HepG2 (cell line): ENCODE measurements at regions of chr13 and their contacts with region 1.

Region 1: DNA sequence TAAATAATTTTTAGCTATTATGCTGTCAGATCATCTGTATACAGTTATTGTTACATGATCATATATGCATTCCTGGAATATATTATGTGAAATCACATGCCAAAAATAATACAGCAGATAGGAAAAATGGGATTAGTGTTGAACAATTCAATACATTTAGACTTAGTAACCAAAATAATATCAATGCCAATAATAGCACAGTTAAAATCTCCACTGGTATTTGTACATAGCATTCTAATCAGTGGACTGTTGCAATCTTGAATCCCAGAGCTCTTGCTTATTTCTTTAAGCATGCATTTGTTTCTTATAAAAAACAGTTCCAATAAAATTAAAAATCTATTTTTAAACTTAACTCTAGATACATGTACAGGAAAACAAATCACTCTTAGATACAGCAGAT is 2772.2 kb downstream of the PCDH9 start:
- DNase-seq: no peak
- ATAC-seq: no peak
- H3K4me3 ChIP-seq: no peak overlapping the region
- H3K27ac ChIP-seq: no peak overlapping the region
- H3K4me1 ChIP-seq: no peaks in the 10 kb centered on the region
- H3K27me3 ChIP-seq: no peaks in the 10 kb centered on the region
- CTCF ChIP-seq: no peak
- EP300 ChIP-seq: no peak
- POLR2A ChIP-seq: no peak
- RAD21 ChIP-seq: no peak

Region 2: DNA sequence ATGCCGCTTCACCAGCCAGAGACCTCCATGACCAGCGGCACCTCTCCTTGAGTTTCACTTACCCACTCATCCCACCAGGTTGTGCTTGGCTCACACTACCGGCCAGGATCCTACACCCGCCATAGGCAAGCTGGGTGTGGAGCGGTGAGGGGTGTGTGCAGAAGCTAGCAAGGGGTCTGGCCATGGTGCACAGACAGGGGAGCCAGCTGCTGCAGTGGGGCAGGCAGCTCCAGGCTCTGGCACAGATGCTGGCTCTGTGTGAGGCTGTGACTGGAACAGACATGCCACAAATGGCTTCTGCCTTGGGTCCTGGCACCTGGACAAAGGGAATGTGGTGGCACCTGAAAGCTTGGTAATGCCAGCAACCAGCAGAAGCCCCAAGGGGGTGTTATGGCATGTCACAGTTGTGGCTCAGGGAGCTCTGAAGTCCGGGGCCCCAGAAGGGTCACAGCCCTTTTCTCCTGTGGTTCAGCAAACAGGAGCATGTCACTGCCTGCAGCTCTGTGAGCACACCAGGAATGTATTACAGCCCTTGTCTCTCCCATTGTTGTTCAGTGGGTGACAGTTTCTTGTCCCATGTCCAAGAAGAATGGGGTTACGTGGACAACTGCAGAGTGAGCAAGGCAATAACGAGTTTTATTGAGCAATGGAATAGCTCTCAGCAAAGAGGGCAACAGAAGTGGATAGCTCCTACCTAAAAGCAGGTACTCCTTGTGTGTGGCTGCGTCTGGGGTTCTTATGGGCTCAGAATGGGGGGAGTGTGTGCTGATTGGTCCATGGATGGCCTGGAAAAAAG is 251.3 kb before region 1 on chr13:
- CTCF ChIA-PET with region 1: no interaction called
- POLR2A ChIA-PET with region 1: no interaction called
- in situ Hi-C with region 1: no loop called
- intact Hi-C with region 1: no loop called
- DNase-seq: no peak
- ATAC-seq: no peak
- H3K4me3 ChIP-seq: no peak overlapping the region
- H3K27ac ChIP-seq: no peak overlapping the region
- H3K4me1 ChIP-seq: no peaks in the 10 kb centered on the region
- H3K27me3 ChIP-seq: no peaks in the 10 kb centered on the region
- CTCF ChIP-seq: no peak
- EP300 ChIP-seq: no peak
- POLR2A ChIP-seq: no peak
- RAD21 ChIP-seq: no peak

Region 3: GRCh38 chr13:64274481-64275217 is 183.3 kb before region 1 on chr13:
- CTCF ChIA-PET with region 1: no interaction called
- POLR2A ChIA-PET with region 1: no interaction called
- in situ Hi-C with region 1: no loop called
- intact Hi-C with region 1: no loop called
- DNase-seq: no peak
- ATAC-seq: no peak
- H3K4me3 ChIP-seq: no peak overlapping the region
- H3K27ac ChIP-seq: no peak overlapping the region
- H3K4me1 ChIP-seq: no peaks in the 10 kb centered on the region
- H3K27me3 ChIP-seq: no peaks in the 10 kb centered on the region
- CTCF ChIP-seq: no peak
- EP300 ChIP-seq: no peak
- POLR2A ChIP-seq: no peak
- RAD21 ChIP-seq: no peak

Region 4: GRCh38 chr13:64410276-64411053 is 47.5 kb before region 1 on chr13:
- CTCF ChIA-PET with region 1: no interaction called
- POLR2A ChIA-PET with region 1: no interaction called
- in situ Hi-C with region 1: no loop called
- intact Hi-C with region 1: loop called (anchors 1 kb)
- DNase-seq: no peak
- ATAC-seq: no peak
- H3K4me3 ChIP-seq: no peak overlapping the region
- H3K27ac ChIP-seq: no peak overlapping the region
- H3K4me1 ChIP-seq: no peaks in the 10 kb centered on the region
- H3K27me3 ChIP-seq: no peaks in the 10 kb centered on the region; a peak in 1 of 5 replicates
- CTCF ChIP-seq: no peak
- EP300 ChIP-seq: no peak
- POLR2A ChIP-seq: no peak
- RAD21 ChIP-seq: no peak